ENCODE measurements at regions of chr16 and their contacts with region 1.

Region 1: GRCh38 chr16:83952940-83953795 is at the start of gene OSGIN1:
- DNase-seq: peak; percentile 96 to 98 (median 96)
- ATAC-seq: peak; percentile 91
- H3K4me3 ChIP-seq: peak within 1 kb of the TSS; percentile 64
- H3K27ac ChIP-seq: peak within 1 kb of the TSS; percentile 85
- H3K4me1 ChIP-seq: peaks cover 18 to 51% of the 10 kb centered on the region in 2 experiments
- H3K27me3 ChIP-seq: no peaks in the 10 kb centered on the region
- CTCF ChIP-seq: no peak
- EP300 ChIP-seq: peak; percentile 48
- POLR2A ChIP-seq: peak; percentile 93
- RAD21 ChIP-seq: no peak
- polyA plus RNA-seq, gene OSGIN1: 0.03 to 0.04 TPM

Region 2: GRCh38 chr16:83926726-83927397 is 26.3 kb before region 1 on chr16:
- CTCF ChIA-PET with region 1: interaction called, 5 read pairs
- POLR2A ChIA-PET with region 1: interaction called, 3 read pairs
- in situ Hi-C with region 1: no loop called
- intact Hi-C with region 1: loop called (anchors 2 kb)
- DNase-seq: peak; percentile 82 to 91 (median 88)
- ATAC-seq: peak; percentile 94
- H3K4me3 ChIP-seq: no peak overlapping the region
- H3K27ac ChIP-seq: no peak overlapping the region
- H3K4me1 ChIP-seq: peaks cover 0 to 31% of the 10 kb centered on the region in 2 experiments; a peak in 2 of 5 replicates
- H3K27me3 ChIP-seq: peaks cover 53 to 93% of the 10 kb centered on the region in 2 experiments
- CTCF ChIP-seq: peak; percentile 93 to 96 (median 95)
- EP300 ChIP-seq: no peak
- POLR2A ChIP-seq: no peak
- RAD21 ChIP-seq: peak; percentile 53 to 80

Region 3: DNA sequence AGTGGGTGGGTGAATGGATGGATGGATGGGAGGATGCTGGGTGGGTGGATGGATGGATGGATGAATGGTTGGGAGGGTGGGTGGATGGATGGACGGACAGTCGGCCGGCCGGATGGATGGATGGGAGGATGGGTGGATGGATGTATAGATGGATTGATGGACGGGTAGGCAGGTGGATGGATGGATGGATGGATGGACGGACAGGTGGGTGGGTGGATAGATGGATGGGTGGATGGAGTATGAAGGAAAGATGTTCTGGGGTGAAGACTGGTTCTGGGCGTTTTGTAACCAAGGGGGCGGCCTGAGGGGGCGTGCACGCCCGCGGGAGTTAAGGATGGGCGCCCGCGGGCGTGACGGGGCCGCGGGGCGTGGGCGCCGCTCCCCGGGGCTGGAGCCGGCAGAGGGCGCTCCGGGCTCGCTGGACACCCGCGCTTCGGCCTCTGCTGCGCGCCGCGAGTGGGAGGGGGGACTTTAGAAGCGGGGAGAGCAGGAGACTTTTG is 14.7 kb after region 1 on chr16 and contains the start of gene NECAB2:
- CTCF ChIA-PET with region 1: no interaction called
- POLR2A ChIA-PET with region 1: interaction called, 22 read pairs
- in situ Hi-C with region 1: no loop called
- intact Hi-C with region 1: no loop called
- DNase-seq: peak; percentile 78 to 98 (median 96)
- ATAC-seq: peak; percentile 91
- H3K4me3 ChIP-seq: peak within 1 kb of the TSS; percentile 33
- H3K27ac ChIP-seq: no peak within 1 kb of the TSS
- H3K4me1 ChIP-seq: peaks cover 0 to 31% of the 10 kb centered on the region in 2 experiments; a peak in 1 of 5 replicates
- H3K27me3 ChIP-seq: peaks cover 18 to 32% of the 10 kb centered on the region in 2 experiments; a peak in 3 of 5 replicates
- CTCF ChIP-seq: peak; percentile 57 to 94 (median 82)
- EP300 ChIP-seq: no peak
- POLR2A ChIP-seq: no peak
- RAD21 ChIP-seq: peak; percentile 86 to 90
- polyA plus RNA-seq, gene NECAB2: not detected

Region 4: GRCh38 chr16:83994087-83994486 is 40.9 kb after region 1 on chr16:
- CTCF ChIA-PET with region 1: no interaction called
- POLR2A ChIA-PET with region 1: no interaction called
- in situ Hi-C with region 1: no loop called
- intact Hi-C with region 1: no loop called
- DNase-seq: no peak
- ATAC-seq: peak; percentile 6; the same call in 1 of the 3 replicates
- H3K4me3 ChIP-seq: no peak overlapping the region
- H3K27ac ChIP-seq: no peak overlapping the region
- H3K4me1 ChIP-seq: peaks cover 2 to 5% of the 10 kb centered on the region in 2 experiments; a peak in 3 of 5 replicates
- H3K27me3 ChIP-seq: peaks cover 64 to 88% of the 10 kb centered on the region in 2 experiments
- CTCF ChIP-seq: no peak
- EP300 ChIP-seq: no peak
- POLR2A ChIP-seq: no peak
- RAD21 ChIP-seq: no peak

Region 5: DNA sequence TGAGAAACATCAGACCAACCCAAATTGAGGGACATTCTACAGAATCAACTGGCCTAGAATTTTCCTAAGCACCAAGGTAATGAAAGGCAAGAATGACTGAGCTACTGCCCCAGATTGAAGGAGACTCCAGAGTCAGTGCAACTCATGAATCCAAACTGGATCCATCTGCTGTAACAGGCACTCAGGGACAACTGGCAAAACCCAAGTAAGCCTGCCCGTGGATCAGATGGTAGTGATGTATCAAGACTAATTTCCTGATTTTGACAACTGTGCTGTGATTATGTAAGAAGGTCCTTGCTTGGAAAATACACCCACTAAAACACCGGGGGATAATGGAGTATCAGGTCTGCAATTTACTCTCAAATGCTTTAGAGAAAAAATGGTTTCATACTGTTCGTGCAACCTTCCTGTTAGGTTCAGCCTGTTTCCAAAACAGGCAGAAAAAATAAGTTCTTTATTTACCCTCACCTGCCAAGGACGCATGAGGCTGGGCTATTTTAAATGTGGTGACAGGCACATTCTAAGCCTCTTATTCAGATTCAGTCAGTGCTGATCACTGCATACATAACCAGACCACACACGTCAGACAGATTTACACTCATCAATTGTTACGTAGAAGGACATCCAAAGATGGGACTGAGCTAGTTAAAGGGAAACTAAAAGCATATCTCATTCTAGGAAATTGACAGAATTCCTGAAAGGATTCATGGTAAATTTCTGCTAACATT is 156.6 kb after region 1 on chr16:
- CTCF ChIA-PET with region 1: no interaction called
- POLR2A ChIA-PET with region 1: no interaction called
- in situ Hi-C with region 1: no loop called
- intact Hi-C with region 1: no loop called
- DNase-seq: no peak
- ATAC-seq: no peak
- H3K4me3 ChIP-seq: no peak overlapping the region
- H3K27ac ChIP-seq: no peak overlapping the region
- H3K4me1 ChIP-seq: peaks cover 0 to 7% of the 10 kb centered on the region in 2 experiments; a peak in 2 of 5 replicates
- H3K27me3 ChIP-seq: no peaks in the 10 kb centered on the region
- CTCF ChIP-seq: no peak
- EP300 ChIP-seq: no peak
- POLR2A ChIP-seq: no peak
- RAD21 ChIP-seq: no peak

Region 6: GRCh38 chr16:84175350-84176081 is 222.3 kb after region 1 on chr16:
- CTCF ChIA-PET with region 1: no interaction called
- POLR2A ChIA-PET with region 1: no interaction called
- in situ Hi-C with region 1: loop called (anchors 10 kb)
- intact Hi-C with region 1: loop called (anchors 5 kb)
- DNase-seq: peak; percentile 76 to 85 (median 80)
- ATAC-seq: peak; percentile 92
- H3K4me3 ChIP-seq: no peak overlapping the region
- H3K27ac ChIP-seq: no peak overlapping the region
- H3K4me1 ChIP-seq: peaks cover 7 to 36% of the 10 kb centered on the region in 2 experiments; a peak in 3 of 5 replicates
- H3K27me3 ChIP-seq: peaks cover 5 to 26% of the 10 kb centered on the region in 2 experiments; a peak in 4 of 5 replicates
- CTCF ChIP-seq: peak; percentile 80 to 92 (median 90)
- EP300 ChIP-seq: no peak
- POLR2A ChIP-seq: no peak
- RAD21 ChIP-seq: peak; percentile 81 to 92

Region 7: GRCh38 chr16:84484579-84485254 is 531.5 kb after region 1 on chr16:
- CTCF ChIA-PET with region 1: no interaction called
- POLR2A ChIA-PET with region 1: no interaction called
- in situ Hi-C with region 1: loop called (anchors 5 kb)
- intact Hi-C with region 1: loop called (anchors 1 kb)
- DNase-seq: peak; percentile 72 to 83 (median 74)
- ATAC-seq: peak; percentile 92
- H3K4me3 ChIP-seq: no peak overlapping the region
- H3K27ac ChIP-seq: no peak overlapping the region
- H3K4me1 ChIP-seq: peaks cover 0 to 16% of the 10 kb centered on the region in 2 experiments; a peak in 2 of 5 replicates
- H3K27me3 ChIP-seq: no peaks in the 10 kb centered on the region
- CTCF ChIP-seq: peak; percentile 88 to 94 (median 91)
- EP300 ChIP-seq: no peak
- POLR2A ChIP-seq: no peak
- RAD21 ChIP-seq: peak; percentile 95 to 97